ENCODE measurements at regions of chr9 and their contacts with region 1.

Region 1: GRCh38 chr9:14768405-14769229 is 46.1 kb upstream of the CER1 start:
- DNase-seq: no peak
- ATAC-seq: peak; percentile 49; the same call in 2 of the 3 replicates
- H3K4me3 ChIP-seq: no peak overlapping the region
- H3K27ac ChIP-seq: no peak overlapping the region
- H3K4me1 ChIP-seq: no peaks in the 10 kb centered on the region
- H3K27me3 ChIP-seq: no peaks in the 10 kb centered on the region
- CTCF ChIP-seq: peak; percentile 59 to 78 (median 64)
- EP300 ChIP-seq: no peak
- POLR2A ChIP-seq: no peak
- RAD21 ChIP-seq: peak; percentile 89

Region 2: DNA sequence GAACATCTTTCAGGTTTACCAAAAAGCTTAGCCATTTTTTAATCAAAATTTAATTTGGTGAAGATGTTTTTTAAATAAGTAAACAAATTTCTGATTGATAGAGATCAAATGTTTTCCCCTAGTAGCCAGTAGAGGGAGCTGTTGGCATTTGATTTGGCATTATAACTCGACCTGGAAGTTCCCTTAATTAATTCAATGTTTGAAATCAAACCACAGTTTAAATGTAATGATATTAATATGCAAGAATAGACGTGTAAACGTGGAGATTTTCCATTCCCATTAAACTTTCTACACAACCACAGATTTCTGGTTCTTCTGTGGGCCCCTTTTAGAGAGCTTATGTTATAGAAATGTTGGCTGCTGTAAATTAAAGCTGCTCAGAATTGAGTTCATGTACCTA is 1341.0 kb before region 1 on chr9:
- CTCF ChIA-PET with region 1: interaction called, 6 read pairs
- POLR2A ChIA-PET with region 1: no interaction called
- RAD21 ChIA-PET with region 1: no interaction called
- SMC1A ChIA-PET with region 1: interaction called, 3 read pairs
- in situ Hi-C with region 1: no loop called
- intact Hi-C with region 1: loop called (anchors 5 kb)
- DNase-seq: no peak
- ATAC-seq: 0 out of 3 replicates have a peak, but pooled peaks have one; percentile 35
- H3K4me3 ChIP-seq: no peak overlapping the region
- H3K27ac ChIP-seq: no peak overlapping the region
- H3K4me1 ChIP-seq: no peaks in the 10 kb centered on the region
- H3K27me3 ChIP-seq: no peaks in the 10 kb centered on the region; a peak in 1 of 4 replicates
- CTCF ChIP-seq: peak; percentile 49 to 71 (median 50); a peak in 5 of 6 replicates
- EP300 ChIP-seq: no peak
- POLR2A ChIP-seq: no peak
- RAD21 ChIP-seq: peak; percentile 76

Region 3: DNA sequence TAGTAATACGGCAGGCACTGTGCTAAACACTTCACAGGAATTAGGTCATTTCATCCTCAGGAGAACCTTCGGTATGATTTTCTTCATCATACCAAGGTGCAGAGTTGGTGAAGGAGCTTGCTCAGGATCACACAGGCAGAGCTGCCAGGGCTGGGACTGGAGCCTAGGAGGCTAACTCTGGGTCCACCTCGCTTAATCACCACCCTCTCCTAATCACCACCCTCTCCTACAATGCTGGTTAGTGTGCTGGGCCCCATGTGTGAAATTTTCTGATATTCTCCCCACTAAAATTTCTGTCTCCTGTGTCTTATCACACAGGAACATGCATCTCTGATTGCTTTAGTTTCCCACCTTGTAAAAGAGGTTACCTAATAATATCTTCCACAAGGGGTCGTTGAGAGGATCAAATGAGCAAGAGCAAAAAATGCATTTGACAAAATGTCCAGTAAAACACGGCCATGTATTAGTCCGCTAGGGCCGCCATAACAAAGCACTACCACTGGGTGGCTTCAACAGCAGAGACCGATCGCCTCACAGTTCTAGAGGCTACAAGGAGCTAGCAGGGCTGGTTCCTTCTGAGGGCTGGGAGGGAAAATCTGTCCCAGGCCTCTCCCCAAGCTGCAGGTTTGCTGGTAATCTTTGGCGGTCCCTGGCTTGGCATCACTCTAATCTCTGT is 326.5 kb before region 1 on chr9:
- CTCF ChIA-PET with region 1: interaction called, 10 read pairs
- POLR2A ChIA-PET with region 1: no interaction called
- RAD21 ChIA-PET with region 1: interaction called, 3 read pairs
- SMC1A ChIA-PET with region 1: interaction called, 5 read pairs
- in situ Hi-C with region 1: no loop called
- intact Hi-C with region 1: loop called (anchors 1 kb)
- DNase-seq: no peak
- ATAC-seq: peak; percentile 90
- H3K4me3 ChIP-seq: no peak overlapping the region
- H3K27ac ChIP-seq: no peak overlapping the region
- H3K4me1 ChIP-seq: no peaks in the 10 kb centered on the region
- H3K27me3 ChIP-seq: no peaks in the 10 kb centered on the region; a peak in 1 of 4 replicates
- CTCF ChIP-seq: peak; percentile 12 to 48 (median 19); a peak in 3 of 6 replicates
- EP300 ChIP-seq: no peak
- POLR2A ChIP-seq: no peak
- RAD21 ChIP-seq: peak; percentile 29; the same call in 1 of the 2 replicates

Region 4: DNA sequence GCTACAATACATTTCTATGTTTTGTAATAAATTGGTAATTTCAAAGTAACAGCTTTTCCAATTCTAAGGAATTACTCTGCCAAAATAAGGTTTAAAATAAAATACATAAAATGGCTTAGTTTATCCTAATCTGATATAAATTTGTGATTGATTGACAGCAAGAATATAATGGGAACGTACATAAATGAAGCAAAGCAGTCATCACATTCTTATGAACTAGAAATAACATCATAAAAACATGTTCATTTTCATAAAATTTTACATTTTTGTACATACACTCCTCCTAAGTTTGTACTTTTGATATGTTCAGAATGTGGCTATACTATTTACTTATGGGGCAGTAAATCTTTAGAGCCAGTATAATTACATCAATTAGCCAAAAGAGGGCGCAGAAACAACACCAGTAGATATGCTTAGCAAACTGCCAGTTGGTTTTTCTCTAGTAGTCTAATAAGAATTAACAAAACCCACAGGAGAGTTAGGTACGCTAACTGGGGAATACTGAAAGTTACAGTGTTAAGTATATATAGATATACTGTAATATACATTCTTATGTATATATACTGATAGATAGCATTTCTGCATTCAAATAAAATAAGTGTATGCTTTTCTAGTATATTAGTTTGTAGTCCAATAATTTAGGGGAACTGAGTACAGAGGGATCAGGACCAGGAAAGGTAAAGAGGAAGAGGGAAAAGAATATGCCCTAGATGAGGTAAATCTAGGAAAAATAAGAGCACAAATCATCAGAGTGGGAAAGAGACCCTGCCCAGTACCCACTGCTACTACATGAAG is 152.2 kb before region 1 on chr9:
- CTCF ChIA-PET with region 1: interaction called, 135 read pairs
- POLR2A ChIA-PET with region 1: interaction called, 4 read pairs
- RAD21 ChIA-PET with region 1: interaction called, 35 read pairs
- SMC1A ChIA-PET with region 1: interaction called, 52 read pairs
- in situ Hi-C with region 1: loop called (anchors 5 kb)
- intact Hi-C with region 1: loop called (anchors 1 kb)
- DNase-seq: no peak
- ATAC-seq: peak; percentile 92
- H3K4me3 ChIP-seq: no peak overlapping the region
- H3K27ac ChIP-seq: no peak overlapping the region
- H3K4me1 ChIP-seq: no peaks in the 10 kb centered on the region
- H3K27me3 ChIP-seq: no peaks in the 10 kb centered on the region
- CTCF ChIP-seq: peak; percentile 53 to 65 (median 57)
- EP300 ChIP-seq: no peak
- POLR2A ChIP-seq: no peak
- RAD21 ChIP-seq: peak; percentile 81

Region 5: GRCh38 chr9:14756291-14756690 is 12.3 kb before region 1 on chr9:
- CTCF ChIA-PET with region 1: interaction called, 10 read pairs
- POLR2A ChIA-PET with region 1: no interaction called
- RAD21 ChIA-PET with region 1: interaction called, 5 read pairs
- SMC1A ChIA-PET with region 1: interaction called, 6 read pairs
- in situ Hi-C with region 1: no loop called
- intact Hi-C with region 1: no loop called
- DNase-seq: no peak
- ATAC-seq: no peak
- H3K4me3 ChIP-seq: no peak overlapping the region
- H3K27ac ChIP-seq: no peak overlapping the region
- H3K4me1 ChIP-seq: no peaks in the 10 kb centered on the region
- H3K27me3 ChIP-seq: no peaks in the 10 kb centered on the region; a peak in 2 of 4 replicates
- CTCF ChIP-seq: no peak
- EP300 ChIP-seq: no peak
- POLR2A ChIP-seq: no peak
- RAD21 ChIP-seq: no peak